Posterior cingulate gyrus (tissue), 11 donors: ENCODE measurements at regions of chr22 and their contacts with region 1.

Region 1: DNA sequence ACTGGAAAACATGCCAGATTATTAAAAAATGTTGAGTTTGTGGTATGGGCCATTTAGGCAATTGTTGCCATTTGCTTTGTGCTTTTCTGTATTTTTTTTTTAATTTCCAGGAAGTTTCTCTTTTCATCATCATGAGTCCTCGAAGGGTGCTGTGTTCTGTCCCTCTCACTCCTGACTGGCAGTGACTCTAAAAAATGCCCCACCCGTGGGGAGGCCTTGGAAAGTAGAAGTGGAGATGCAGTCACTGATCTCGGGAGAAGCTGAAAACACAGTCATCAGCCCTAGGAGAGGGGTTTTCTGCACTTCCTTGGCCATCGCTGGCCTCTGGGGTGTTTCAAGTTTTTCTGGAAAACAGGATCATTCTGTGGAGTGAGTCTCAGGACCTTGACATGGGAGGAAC is 98.5 kb upstream of the GRK3 start:
- DNase-seq: no peak

Region 2: GRCh38 chr22:25546751-25547150 is 80.8 kb after region 1 on chr22:
- intact Hi-C with region 1: loop called (anchors 10 kb)
- DNase-seq: no peak

Region 3: GRCh38 chr22:25754527-25755202 is 288.7 kb after region 1 on chr22:
- intact Hi-C with region 1: no loop called
- DNase-seq: peak in 1 of 10 donors; percentile 66

Region 4: GRCh38 chr22:25777870-25778269 is 311.9 kb after region 1 on chr22:
- intact Hi-C with region 1: loop called (anchors 1 kb)
- DNase-seq: peak in 2 of 10 donors; percentile 12 to 13